Naive thymus-derived CD4-positive, alpha-beta T cell (primary cell): ENCODE measurements at regions of chr15 and their contacts with region 1.

Region 1: GRCh38 chr15:44501768-44502366 is 35.1 kb upstream of the EIF3J start:
- DNase-seq: peak in 5 of 9 donors; percentile 24 to 35 (median 29)
- ATAC-seq: peak; percentile 69
- H3K4me3 ChIP-seq: no peak overlapping the region
- H3K4me3 Mint-ChIP-seq: no peak overlapping the region
- H3K27ac ChIP-seq: no peak overlapping the region
- H3K27ac Mint-ChIP-seq: no peak overlapping the region
- H3K4me1 ChIP-seq: no peaks in the 10 kb centered on the region
- H3K4me1 Mint-ChIP-seq: peaks cover 0 to 21% (median 19%) of the 10 kb centered on the region in 7 donors
- H3K27me3 ChIP-seq: no peaks in the 10 kb centered on the region
- H3K27me3 Mint-ChIP-seq: no peaks in the 10 kb centered on the region

Region 2: DNA sequence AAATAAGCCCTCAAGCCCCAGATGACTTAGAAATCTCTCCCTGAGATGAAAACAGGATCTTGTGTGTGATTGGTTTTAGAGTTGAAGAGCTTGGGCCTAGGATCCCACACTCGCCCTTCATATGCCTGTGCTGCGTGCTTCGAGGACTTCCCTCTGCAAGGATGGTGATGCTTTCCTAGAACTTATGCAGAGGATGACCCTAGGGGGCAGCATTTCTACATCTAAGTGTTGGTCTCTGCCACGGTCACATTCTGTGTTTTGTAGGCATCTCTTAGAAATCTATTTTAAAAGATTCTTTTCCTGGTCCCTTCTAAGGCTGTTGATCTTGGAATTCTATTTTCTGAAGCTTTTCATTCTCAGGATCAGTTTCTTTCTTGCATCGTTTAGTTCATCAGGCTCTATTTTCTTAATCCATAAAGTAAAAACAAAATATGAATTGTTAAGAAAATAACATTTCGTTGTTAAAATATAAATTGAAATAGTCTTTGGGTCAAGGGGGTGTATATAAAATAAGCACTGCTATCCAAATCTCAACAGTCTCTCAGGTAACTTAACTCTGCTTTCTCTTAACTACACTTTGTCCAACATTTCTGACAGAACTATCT is 629.3 kb before region 1 on chr15:
- CTCF ChIA-PET with region 1: no interaction called
- POLR2A ChIA-PET with region 1: interaction called, 3 read pairs
- intact Hi-C with region 1: loop called in 1 of 2 experiments (anchors 2 kb)
- DNase-seq: peak in 2 of 9 donors; percentile 11 to 22
- ATAC-seq: no peak
- H3K4me3 ChIP-seq: no peak overlapping the region
- H3K4me3 Mint-ChIP-seq: no peak overlapping the region
- H3K27ac ChIP-seq: no peak overlapping the region
- H3K27ac Mint-ChIP-seq: no peak overlapping the region
- H3K4me1 ChIP-seq: peaks cover 0 to 3% of the 10 kb centered on the region in 2 donors
- H3K4me1 Mint-ChIP-seq: peaks cover 0 to 5% (median 0%) of the 10 kb centered on the region in 7 donors
- H3K27me3 ChIP-seq: no peaks in the 10 kb centered on the region
- H3K27me3 Mint-ChIP-seq: no peaks in the 10 kb centered on the region

Region 3: DNA sequence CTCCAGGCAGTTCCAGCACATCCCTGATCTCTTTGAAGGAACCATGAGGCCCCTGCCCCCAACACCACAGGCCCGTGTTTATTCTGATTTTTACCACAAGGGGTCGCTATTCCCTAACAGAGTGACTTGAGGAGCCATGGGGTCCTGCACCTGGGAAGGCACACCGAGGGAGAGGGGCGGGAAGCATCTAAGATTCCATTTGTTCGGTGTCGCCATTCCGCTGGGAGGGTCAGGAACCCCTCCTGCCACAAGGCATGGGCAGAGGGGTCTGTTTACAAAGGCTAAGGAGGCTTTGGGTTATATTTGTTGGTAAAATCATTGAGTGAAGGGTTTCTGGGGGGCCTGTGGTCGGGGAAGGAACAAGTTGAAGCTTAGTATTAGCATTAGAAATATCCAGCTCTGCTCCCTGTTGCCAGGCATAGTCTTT is 598.0 kb before region 1 on chr15:
- CTCF ChIA-PET with region 1: interaction called, 3 read pairs
- POLR2A ChIA-PET with region 1: no interaction called
- intact Hi-C with region 1: loop called in 1 of 2 experiments (anchors 2 kb)
- DNase-seq: peak; percentile 8 to 62 (median 39)
- ATAC-seq: peak; percentile 65
- H3K4me3 ChIP-seq: no peak overlapping the region
- H3K4me3 Mint-ChIP-seq: no peak overlapping the region
- H3K27ac ChIP-seq: no peak overlapping the region
- H3K27ac Mint-ChIP-seq: no peak overlapping the region
- H3K4me1 ChIP-seq: no peaks in the 10 kb centered on the region
- H3K4me1 Mint-ChIP-seq: peaks cover 0 to 9% (median 4%) of the 10 kb centered on the region in 7 donors
- H3K27me3 ChIP-seq: no peaks in the 10 kb centered on the region
- H3K27me3 Mint-ChIP-seq: no peaks in the 10 kb centered on the region

Region 4: GRCh38 chr15:44219073-44219472 is 282.8 kb before region 1 on chr15:
- CTCF ChIA-PET with region 1: interaction called, 3 read pairs
- POLR2A ChIA-PET with region 1: no interaction called
- intact Hi-C with region 1: loop called in 1 of 2 experiments (anchors 1 kb)
- DNase-seq: no peak
- ATAC-seq: no peak
- H3K4me3 ChIP-seq: no peak overlapping the region
- H3K4me3 Mint-ChIP-seq: no peak overlapping the region
- H3K27ac ChIP-seq: no peak overlapping the region
- H3K27ac Mint-ChIP-seq: no peak overlapping the region
- H3K4me1 ChIP-seq: no peaks in the 10 kb centered on the region
- H3K4me1 Mint-ChIP-seq: peaks cover 0 to 5% (median 3%) of the 10 kb centered on the region in 7 donors
- H3K27me3 ChIP-seq: no peaks in the 10 kb centered on the region
- H3K27me3 Mint-ChIP-seq: peaks cover 13 to 27% (median 22%) of the 10 kb centered on the region in 5 donors

Region 5: DNA sequence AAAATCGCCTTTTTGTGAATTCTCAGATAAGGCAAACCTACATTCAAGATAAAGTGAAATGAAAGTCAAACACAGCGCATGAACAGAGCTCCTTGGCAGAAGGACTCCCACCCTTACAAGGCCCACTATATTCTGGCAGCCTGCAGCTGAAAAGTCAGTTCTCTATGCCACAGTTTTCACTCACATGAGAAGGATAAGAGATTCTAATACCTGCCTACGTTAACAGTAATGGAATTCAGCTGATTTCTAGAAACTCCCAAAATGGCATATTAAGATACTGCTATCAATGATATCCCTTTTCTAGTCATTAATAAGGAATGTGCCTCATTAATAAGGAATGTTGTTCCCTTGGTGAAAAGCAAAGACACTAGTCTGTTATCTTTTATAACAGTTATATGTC is 993.7 kb after region 1 on chr15:
- CTCF ChIA-PET with region 1: no interaction called
- POLR2A ChIA-PET with region 1: no interaction called
- intact Hi-C with region 1: no loop called
- DNase-seq: no peak
- ATAC-seq: no peak
- H3K4me3 ChIP-seq: no peak overlapping the region
- H3K4me3 Mint-ChIP-seq: no peak overlapping the region
- H3K27ac ChIP-seq: no peak overlapping the region
- H3K27ac Mint-ChIP-seq: no peak overlapping the region
- H3K4me1 ChIP-seq: no peaks in the 10 kb centered on the region
- H3K4me1 Mint-ChIP-seq: no peaks in the 10 kb centered on the region
- H3K27me3 ChIP-seq: no peaks in the 10 kb centered on the region
- H3K27me3 Mint-ChIP-seq: no peaks in the 10 kb centered on the region